CD8-positive, alpha-beta memory T cell (primary cell): ENCODE measurements at regions of chr1 and their contacts with region 1.

Region 1: GRCh38 chr1:247390116-247390791 is 25.7 kb upstream of the NLRP3 start:
- DNase-seq: peak; percentile 68 to 85 (median 76)
- H3K4me3 ChIP-seq: no peak overlapping the region
- H3K4me3 Mint-ChIP-seq: peak overlapping the region; percentile 21 to 93 (median 82)
- H3K27ac ChIP-seq: no peak overlapping the region
- H3K27ac Mint-ChIP-seq: peak overlapping the region; percentile 8 to 90 (median 74)
- H3K4me1 ChIP-seq: peaks cover 10% of the 10 kb centered on the region
- H3K4me1 Mint-ChIP-seq: peaks cover 6 to 13% (median 6%) of the 10 kb centered on the region in 3 donors
- H3K27me3 ChIP-seq: no peaks in the 10 kb centered on the region
- H3K27me3 Mint-ChIP-seq: peaks cover 0 to 3% of the 10 kb centered on the region in 2 donors

Region 2: GRCh38 chr1:247189981-247190798 is 200.1 kb before region 1 on chr1:
- CTCF ChIA-PET with region 1: no interaction called
- POLR2A ChIA-PET with region 1: no interaction called
- DNase-seq: no peak
- H3K4me3 ChIP-seq: no peak overlapping the region
- H3K4me3 Mint-ChIP-seq: no peak overlapping the region
- H3K27ac ChIP-seq: no peak overlapping the region
- H3K27ac Mint-ChIP-seq: no peak overlapping the region
- H3K4me1 ChIP-seq: no peaks in the 10 kb centered on the region
- H3K4me1 Mint-ChIP-seq: peaks cover 0 to 5% (median 3%) of the 10 kb centered on the region in 3 donors
- H3K27me3 ChIP-seq: no peaks in the 10 kb centered on the region
- H3K27me3 Mint-ChIP-seq: no peaks in the 10 kb centered on the region

Region 3: DNA sequence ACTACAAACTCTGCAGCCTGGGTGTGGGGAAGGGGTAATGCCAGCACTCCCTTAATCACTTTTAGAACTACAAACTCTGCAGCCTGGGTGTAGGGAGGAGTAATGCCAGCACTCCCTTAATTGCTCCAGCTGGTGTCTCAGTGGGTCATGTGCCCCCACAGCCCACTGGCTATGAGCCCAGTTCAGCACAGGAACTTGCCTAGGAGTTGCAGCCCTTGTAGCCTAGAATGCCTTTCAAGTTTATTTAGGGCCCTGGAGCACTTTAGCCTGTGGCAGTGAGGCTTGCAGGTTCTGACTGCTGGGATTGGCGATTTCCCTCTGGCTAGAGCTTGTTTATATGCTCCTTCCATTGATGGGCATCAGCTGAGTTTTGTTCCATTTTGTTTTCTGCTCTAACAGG is 117.2 kb before region 1 on chr1:
- CTCF ChIA-PET with region 1: no interaction called
- POLR2A ChIA-PET with region 1: no interaction called
- DNase-seq: no peak
- H3K4me3 ChIP-seq: no peak overlapping the region
- H3K4me3 Mint-ChIP-seq: no peak overlapping the region
- H3K27ac ChIP-seq: no peak overlapping the region
- H3K27ac Mint-ChIP-seq: no peak overlapping the region
- H3K4me1 ChIP-seq: no peaks in the 10 kb centered on the region
- H3K4me1 Mint-ChIP-seq: no peaks in the 10 kb centered on the region
- H3K27me3 ChIP-seq: no peaks in the 10 kb centered on the region
- H3K27me3 Mint-ChIP-seq: peaks cover 0 to 10% of the 10 kb centered on the region in 2 donors

Region 4: GRCh38 chr1:247373721-247374141 is 16.5 kb before region 1 on chr1:
- CTCF ChIA-PET with region 1: interaction called, 60 read pairs
- POLR2A ChIA-PET with region 1: interaction called, 3 read pairs
- DNase-seq: peak; percentile 28 to 69 (median 38)
- H3K4me3 ChIP-seq: no peak overlapping the region
- H3K4me3 Mint-ChIP-seq: peak overlapping the region; percentile 32 to 77 (median 52)
- H3K27ac ChIP-seq: no peak overlapping the region
- H3K27ac Mint-ChIP-seq: no peak overlapping the region
- H3K4me1 ChIP-seq: no peaks in the 10 kb centered on the region
- H3K4me1 Mint-ChIP-seq: peaks cover 6 to 9% (median 8%) of the 10 kb centered on the region in 3 donors
- H3K27me3 ChIP-seq: no peaks in the 10 kb centered on the region
- H3K27me3 Mint-ChIP-seq: peaks cover 12 to 27% of the 10 kb centered on the region in 2 donors

Region 5: DNA sequence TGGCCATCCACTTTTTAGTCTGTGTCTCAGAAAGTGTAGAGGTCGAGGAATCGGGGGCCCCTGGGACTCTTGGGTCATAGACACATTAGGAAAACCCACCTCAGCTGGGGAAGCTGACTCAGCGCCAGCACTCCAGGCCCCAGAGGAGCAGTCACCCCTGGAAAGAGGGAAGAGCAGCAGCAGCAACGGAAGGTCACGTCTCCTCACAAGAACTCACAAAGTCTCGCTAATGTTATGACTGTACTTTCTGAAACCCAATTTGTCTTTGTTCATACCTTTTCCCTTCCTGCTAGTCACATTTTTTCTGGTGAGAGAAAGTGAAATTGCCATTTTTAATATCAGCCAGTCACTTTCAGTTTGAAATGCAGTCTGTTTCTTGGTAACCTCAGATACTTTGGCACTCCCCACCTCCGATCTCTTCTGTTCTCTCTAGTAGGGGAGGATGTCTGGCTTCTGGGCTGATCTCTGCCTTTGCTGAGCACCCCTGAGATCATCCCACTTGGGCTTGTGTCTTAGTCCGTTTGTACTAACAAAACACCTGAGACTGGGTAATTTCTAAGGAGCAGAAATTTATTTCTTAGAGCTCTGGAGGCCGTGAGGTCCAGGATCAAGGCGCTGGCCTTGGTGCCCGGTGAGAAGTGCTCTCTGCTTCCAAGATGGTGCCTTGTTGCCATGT is 19.8 kb after region 1 on chr1:
- CTCF ChIA-PET with region 1: interaction called, 43 read pairs
- POLR2A ChIA-PET with region 1: no interaction called
- DNase-seq: peak in 1 of 5 donors; percentile 21
- H3K4me3 ChIP-seq: peak overlapping the region; percentile 21
- H3K4me3 Mint-ChIP-seq: peak overlapping the region; percentile 79 to 87 (median 81)
- H3K27ac ChIP-seq: peak overlapping the region; percentile 21
- H3K27ac Mint-ChIP-seq: peak overlapping the region; percentile 62 to 96 (median 85)
- H3K4me1 ChIP-seq: peaks cover 38% of the 10 kb centered on the region
- H3K4me1 Mint-ChIP-seq: peaks cover 36 to 49% (median 48%) of the 10 kb centered on the region in 3 donors
- H3K27me3 ChIP-seq: no peaks in the 10 kb centered on the region
- H3K27me3 Mint-ChIP-seq: peaks cover 0 to 1% of the 10 kb centered on the region in 2 donors

Region 6: DNA sequence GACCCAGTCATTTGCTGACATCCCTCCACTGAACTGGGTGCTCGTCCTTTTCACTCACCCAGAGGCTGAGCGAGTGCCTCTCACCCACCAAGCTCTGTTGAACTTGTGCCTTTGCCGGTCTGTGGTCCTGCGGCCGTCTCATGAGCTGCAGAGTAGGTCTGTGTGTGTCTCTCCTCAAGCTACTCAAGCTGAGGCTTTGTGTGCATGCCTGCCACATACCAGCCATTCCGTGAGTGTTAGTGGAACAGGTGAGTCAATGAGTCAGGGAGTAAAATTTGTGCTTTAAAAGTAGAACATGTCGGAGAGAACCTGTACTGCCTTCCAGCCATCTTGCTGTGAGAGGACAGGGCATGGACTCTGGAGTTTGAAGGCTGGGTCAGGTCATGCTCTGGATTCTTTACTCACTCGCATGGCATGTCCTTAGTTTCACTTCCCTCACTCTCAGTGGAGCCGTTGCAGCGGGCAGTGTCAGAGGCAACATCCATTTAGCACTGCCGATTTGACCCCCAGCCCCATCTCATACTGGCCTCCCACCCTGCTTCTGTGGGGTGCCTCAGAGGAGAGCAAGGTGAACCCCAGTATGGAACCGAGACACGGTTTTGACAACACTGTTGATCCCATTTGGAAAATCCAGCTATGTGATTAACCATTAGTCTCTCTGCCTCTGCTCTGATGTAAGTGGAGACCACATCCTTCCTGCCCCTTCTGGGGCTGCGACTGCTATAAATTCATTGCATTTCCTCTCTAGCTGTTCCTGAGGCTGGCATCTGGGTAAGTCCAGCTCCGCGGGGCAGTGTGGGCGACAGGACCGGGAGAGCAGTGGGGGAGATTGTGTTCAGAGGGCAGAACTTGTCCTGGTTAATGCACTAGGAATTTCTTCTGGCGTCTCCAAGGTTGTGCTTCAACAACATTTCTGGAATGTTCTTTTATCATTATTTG is 25.4 kb after region 1 on chr1 and contains the start of gene NLRP3:
- CTCF ChIA-PET with region 1: interaction called, 43 read pairs
- POLR2A ChIA-PET with region 1: interaction called, 21 read pairs
- DNase-seq: peak; percentile 9 to 60 (median 46)
- H3K4me3 ChIP-seq: peak within 1 kb of the TSS; percentile 78
- H3K4me3 Mint-ChIP-seq: peak within 1 kb of the TSS; percentile 80 to 94 (median 91)
- H3K27ac ChIP-seq: peak within 1 kb of the TSS; percentile 32
- H3K27ac Mint-ChIP-seq: peak within 1 kb of the TSS; percentile 40 to 91 (median 86)
- H3K4me1 ChIP-seq: peaks cover 22% of the 10 kb centered on the region
- H3K4me1 Mint-ChIP-seq: peaks cover 44 to 57% (median 52%) of the 10 kb centered on the region in 3 donors
- H3K27me3 ChIP-seq: no peaks in the 10 kb centered on the region
- H3K27me3 Mint-ChIP-seq: no peaks in the 10 kb centered on the region
- total RNA-seq, gene NLRP3: 1.8 to 2.6 TPM

Region 7: DNA sequence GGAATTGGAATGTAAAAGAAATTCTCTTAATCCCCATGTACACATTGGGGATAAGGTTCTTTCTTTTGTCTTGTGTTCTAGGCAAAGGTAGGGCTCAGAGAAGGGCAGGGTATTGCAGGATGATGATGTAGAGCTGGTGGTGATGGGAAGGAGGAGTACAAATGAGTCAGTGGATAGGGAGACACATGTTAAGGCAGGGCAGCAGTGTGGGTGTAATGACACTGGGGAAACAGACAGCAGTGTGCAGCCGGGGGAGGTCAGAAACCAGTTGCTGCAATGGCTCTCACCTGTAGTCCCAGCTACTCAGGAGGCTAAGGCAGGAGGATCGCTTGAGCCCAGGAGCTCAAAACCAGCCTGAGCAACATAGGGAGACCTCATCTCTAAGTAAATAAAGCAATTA is 30.8 kb after region 1 on chr1:
- CTCF ChIA-PET with region 1: interaction called, 43 read pairs
- POLR2A ChIA-PET with region 1: interaction called, 21 read pairs
- DNase-seq: no peak
- H3K4me3 ChIP-seq: no peak overlapping the region
- H3K4me3 Mint-ChIP-seq: peak overlapping the region in 6 of 7 donors; percentile 4 to 59 (median 34)
- H3K27ac ChIP-seq: no peak overlapping the region
- H3K27ac Mint-ChIP-seq: peak overlapping the region in 4 of 8 donors; percentile 23 to 78 (median 53)
- H3K4me1 ChIP-seq: peaks cover 11% of the 10 kb centered on the region
- H3K4me1 Mint-ChIP-seq: peaks cover 53 to 63% (median 62%) of the 10 kb centered on the region in 3 donors
- H3K27me3 ChIP-seq: no peaks in the 10 kb centered on the region
- H3K27me3 Mint-ChIP-seq: no peaks in the 10 kb centered on the region

Region 8: GRCh38 chr1:247487057-247487456 is 96.8 kb after region 1 on chr1:
- CTCF ChIA-PET with region 1: interaction called, 154 read pairs
- POLR2A ChIA-PET with region 1: interaction called, 3 read pairs
- DNase-seq: peak in 4 of 5 donors; percentile 8 to 50 (median 39)
- H3K4me3 ChIP-seq: no peak overlapping the region
- H3K4me3 Mint-ChIP-seq: no peak overlapping the region
- H3K27ac ChIP-seq: no peak overlapping the region
- H3K27ac Mint-ChIP-seq: peak overlapping the region in 1 of 8 donors; percentile 3
- H3K4me1 ChIP-seq: no peaks in the 10 kb centered on the region
- H3K4me1 Mint-ChIP-seq: no peaks in the 10 kb centered on the region
- H3K27me3 ChIP-seq: no peaks in the 10 kb centered on the region
- H3K27me3 Mint-ChIP-seq: peaks cover 6 to 10% of the 10 kb centered on the region in 2 donors